H1 (cell line): ENCODE measurements at regions of chr6 and their contacts with region 1.

Region 1: GRCh38 chr6:3372007-3372846 is 84.6 kb downstream of the SLC22A23 start:
- DNase-seq: no peak
- H3K4me3 ChIP-seq: no peak overlapping the region
- H3K27ac ChIP-seq: no peak overlapping the region
- H3K4me1 ChIP-seq: peaks cover 0 to 5% (median 3%) of the 10 kb centered on the region in 4 experiments; a peak in 4 of 7 replicates
- H3K27me3 ChIP-seq: peaks cover 0 to 2% (median 0%) of the 10 kb centered on the region in 4 experiments; a peak in 1 of 7 replicates
- CTCF ChIP-seq: peak; percentile 31 to 67 (median 60)
- EP300 ChIP-seq: no peak
- POLR2A ChIP-seq: no peak
- RAD21 ChIP-seq: peak; percentile 46 to 49

Region 2: DNA sequence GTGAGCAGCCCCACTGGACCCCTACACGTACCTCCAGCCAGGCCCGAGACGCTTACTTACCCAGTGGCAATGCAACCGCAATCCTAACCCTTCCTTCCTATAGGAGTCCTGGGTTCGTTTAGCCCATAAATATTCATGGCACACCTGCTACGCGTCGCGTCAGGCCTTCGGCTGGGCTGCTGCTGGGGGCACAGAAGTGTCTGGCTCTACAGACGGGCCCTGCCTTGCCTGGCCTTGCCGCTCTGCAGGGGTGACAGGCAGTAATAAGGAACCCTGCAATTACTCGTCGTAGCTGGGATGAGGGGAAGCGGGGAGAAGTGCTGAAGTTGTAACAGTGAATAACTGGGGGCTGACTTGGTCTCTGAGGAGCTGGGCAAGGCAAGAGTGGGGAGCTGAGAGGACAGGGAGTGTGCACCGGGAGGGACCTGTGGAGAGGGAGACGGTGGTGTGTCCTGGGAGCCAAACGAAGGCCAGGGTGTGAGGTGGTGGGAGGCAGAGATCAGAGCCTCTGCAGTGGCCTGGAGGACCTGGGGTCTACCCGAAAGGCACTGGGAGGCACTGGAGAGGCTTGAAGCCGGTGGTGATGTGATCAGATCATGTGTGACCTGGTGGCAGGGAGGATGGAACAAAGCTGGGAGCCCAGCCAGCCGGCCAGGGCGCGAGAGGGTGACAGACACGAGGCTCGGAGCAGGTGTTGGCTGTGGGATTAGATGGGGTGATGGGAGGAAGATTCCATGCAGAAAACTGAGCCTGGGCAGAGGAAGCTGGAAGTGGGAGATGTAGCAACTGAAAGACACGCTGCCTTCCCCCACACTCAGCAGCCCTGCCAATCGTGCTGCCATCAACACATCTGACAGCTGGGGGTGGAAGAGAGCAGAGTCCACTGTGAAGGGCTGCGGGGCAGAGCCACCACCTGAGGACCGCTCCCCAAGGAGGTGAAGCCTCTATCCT is 77.0 kb before region 1 on chr6:
- CTCF ChIA-PET with region 1: interaction called, 20 read pairs
- POLR2A ChIA-PET with region 1: no interaction called
- DNase-seq: no peak
- H3K4me3 ChIP-seq: no peak overlapping the region
- H3K27ac ChIP-seq: no peak overlapping the region
- H3K4me1 ChIP-seq: no peaks in the 10 kb centered on the region
- H3K27me3 ChIP-seq: no peaks in the 10 kb centered on the region
- CTCF ChIP-seq: peak; percentile 43 to 64 (median 60); a peak in 3 of 4 replicates
- EP300 ChIP-seq: no peak
- POLR2A ChIP-seq: no peak
- RAD21 ChIP-seq: peak; percentile 66 to 74

Region 3: GRCh38 chr6:3324262-3324942 is 47.8 kb before region 1 on chr6:
- CTCF ChIA-PET with region 1: interaction called, 10 read pairs
- POLR2A ChIA-PET with region 1: no interaction called
- DNase-seq: no peak
- H3K4me3 ChIP-seq: no peak overlapping the region
- H3K27ac ChIP-seq: no peak overlapping the region
- H3K4me1 ChIP-seq: peaks cover 0 to 5% (median 2%) of the 10 kb centered on the region in 4 experiments; a peak in 1 of 7 replicates
- H3K27me3 ChIP-seq: no peaks in the 10 kb centered on the region
- CTCF ChIP-seq: no peak
- EP300 ChIP-seq: no peak
- POLR2A ChIP-seq: no peak
- RAD21 ChIP-seq: no peak

Region 4: DNA sequence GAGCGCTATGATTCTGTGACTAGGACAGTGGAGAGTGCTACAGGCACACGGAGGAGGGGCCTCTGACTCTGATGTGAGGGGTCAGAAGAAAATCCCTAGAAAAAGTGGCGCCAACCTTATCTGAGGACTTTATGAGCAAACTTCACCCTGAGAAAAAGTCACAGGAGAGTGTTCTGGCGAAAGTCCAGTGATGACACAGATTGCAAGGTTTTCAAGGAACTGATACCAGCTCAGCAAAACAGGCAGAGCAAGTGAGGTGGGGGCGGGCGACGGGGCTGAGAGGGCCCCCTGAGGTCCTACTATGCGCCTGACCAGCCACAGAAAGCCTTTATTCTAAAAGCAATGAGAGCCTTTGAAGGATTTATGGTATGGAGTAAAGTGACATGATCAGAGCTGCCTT is 11.3 kb after region 1 on chr6:
- CTCF ChIA-PET with region 1: interaction called, 17 read pairs
- POLR2A ChIA-PET with region 1: no interaction called
- DNase-seq: no peak
- H3K4me3 ChIP-seq: no peak overlapping the region
- H3K27ac ChIP-seq: no peak overlapping the region
- H3K4me1 ChIP-seq: peaks cover 3 to 8% (median 7%) of the 10 kb centered on the region in 4 experiments; a peak in 4 of 7 replicates
- H3K27me3 ChIP-seq: no peaks in the 10 kb centered on the region
- CTCF ChIP-seq: no peak
- EP300 ChIP-seq: no peak
- POLR2A ChIP-seq: no peak
- RAD21 ChIP-seq: no peak

Region 5: GRCh38 chr6:3458706-3459421 is 86.6 kb after region 1 on chr6:
- CTCF ChIA-PET with region 1: no interaction called
- POLR2A ChIA-PET with region 1: no interaction called
- DNase-seq: peak in 1 of 2 experiments; percentile 31
- H3K4me3 ChIP-seq: peak overlapping the region in 3 of 4 experiments; percentile 7 to 72 (median 15); a peak in 3 of 8 replicates
- H3K27ac ChIP-seq: no peak overlapping the region
- H3K4me1 ChIP-seq: peaks cover 7 to 25% (median 19%) of the 10 kb centered on the region in 4 experiments
- H3K27me3 ChIP-seq: peaks cover 2 to 25% (median 13%) of the 10 kb centered on the region in 4 experiments; a peak in 6 of 7 replicates
- CTCF ChIP-seq: no peak
- EP300 ChIP-seq: no peak
- POLR2A ChIP-seq: no peak
- RAD21 ChIP-seq: no peak